Activated T-helper 2 cell treated with anti-CD3 and anti-CD28 coated beads, Interferon-gamma antibody, Interleukin-2, Interleukin-4, amounts not matched to agents 10 μg/mL and 5 μg/mL and 100 μg/mL, durations not matched to agents 14 hours and 24 hours and 36 hours (primary cell): ENCODE measurements at regions of chr1 and their contacts with region 1.

Region 1: DNA sequence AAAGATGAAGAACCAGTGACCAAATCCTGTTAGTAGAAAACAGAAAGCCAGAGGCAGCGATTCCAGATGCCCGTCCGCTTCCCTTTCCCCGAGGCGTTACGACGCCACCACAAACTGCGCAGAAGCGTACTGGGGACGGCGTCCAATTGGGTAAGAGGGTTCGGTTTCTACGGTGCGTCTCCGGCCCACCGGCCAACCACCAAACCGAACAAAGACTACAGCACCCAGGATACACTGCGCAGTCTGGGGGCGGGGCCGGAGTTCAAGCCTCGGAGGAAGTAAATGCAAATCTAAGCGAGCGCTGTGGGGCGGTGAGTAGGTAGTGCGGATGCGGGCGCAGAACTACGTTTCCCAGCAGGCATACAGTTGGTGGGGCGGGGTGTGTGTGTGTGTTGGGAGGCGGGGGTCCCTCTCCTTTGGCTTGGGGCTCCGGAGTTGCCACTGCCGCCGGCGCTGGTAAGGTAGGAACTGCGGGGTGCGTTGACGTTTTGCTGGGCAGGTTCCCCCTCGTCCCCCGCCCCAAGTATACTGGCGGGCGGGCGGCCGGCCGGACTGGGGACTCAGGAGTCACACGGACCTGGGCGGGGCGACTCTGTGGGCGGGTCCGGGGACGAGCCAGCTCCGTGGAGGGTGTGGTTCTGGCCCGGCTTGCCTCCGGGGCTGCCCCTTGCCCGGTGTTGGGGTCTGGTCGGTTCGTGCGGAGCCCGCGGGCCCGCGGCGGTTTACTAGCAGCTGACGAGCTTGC is at the starts of genes SWT1 and TRMT1L:
- DNase-seq: peak; percentile 98
- H3K4me3 Mint-ChIP-seq: peak within 1 kb of the TSS; percentile 95
- H3K27ac Mint-ChIP-seq: peak within 1 kb of the TSS; percentile 95
- H3K4me1 Mint-ChIP-seq: peaks cover 52% of the 10 kb centered on the region
- H3K27me3 Mint-ChIP-seq: no peaks in the 10 kb centered on the region
- total RNA-seq, gene SWT1: 2.1 and 2.7 TPM in 2 replicates
- total RNA-seq, gene TRMT1L: 25.9 and 28.7 TPM in 2 replicates

Region 2: DNA sequence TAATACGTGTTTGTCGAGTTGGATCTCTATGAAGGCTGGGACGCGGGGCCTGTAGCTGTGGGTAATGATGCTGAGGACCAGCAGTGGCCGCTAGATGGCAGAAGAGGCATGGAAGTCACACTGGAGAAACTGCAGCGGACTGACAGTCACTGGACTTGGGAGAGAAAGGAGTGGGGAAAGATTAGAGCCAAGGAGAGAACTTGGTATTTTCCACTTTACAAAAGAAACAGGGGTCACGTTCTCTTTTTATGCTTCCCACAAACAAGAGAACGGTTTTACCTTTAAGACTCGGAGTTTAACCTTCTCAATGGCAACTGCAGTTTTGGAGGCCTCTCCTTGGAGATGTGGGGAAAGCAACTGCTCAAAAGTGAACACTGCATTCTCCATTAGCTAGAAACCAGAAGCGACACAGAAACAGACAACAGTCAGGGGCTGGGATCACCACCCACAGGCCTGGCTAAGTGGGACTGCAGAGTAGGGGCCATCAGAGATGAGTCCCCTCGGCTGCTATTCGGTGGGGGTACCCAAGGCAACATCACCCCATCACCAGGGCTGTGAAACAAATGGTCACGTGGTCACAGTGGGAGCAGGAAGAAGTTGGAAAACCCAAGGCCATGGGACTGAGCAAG is 351.2 kb before region 1 on chr1:
- intact Hi-C with region 1: loop called (anchors 5 kb)
- DNase-seq: peak; percentile 64
- H3K4me3 Mint-ChIP-seq: no peak overlapping the region
- H3K27ac Mint-ChIP-seq: peak overlapping the region; percentile 31
- H3K4me1 Mint-ChIP-seq: peaks cover 2% of the 10 kb centered on the region
- H3K27me3 Mint-ChIP-seq: no peaks in the 10 kb centered on the region

Region 3: DNA sequence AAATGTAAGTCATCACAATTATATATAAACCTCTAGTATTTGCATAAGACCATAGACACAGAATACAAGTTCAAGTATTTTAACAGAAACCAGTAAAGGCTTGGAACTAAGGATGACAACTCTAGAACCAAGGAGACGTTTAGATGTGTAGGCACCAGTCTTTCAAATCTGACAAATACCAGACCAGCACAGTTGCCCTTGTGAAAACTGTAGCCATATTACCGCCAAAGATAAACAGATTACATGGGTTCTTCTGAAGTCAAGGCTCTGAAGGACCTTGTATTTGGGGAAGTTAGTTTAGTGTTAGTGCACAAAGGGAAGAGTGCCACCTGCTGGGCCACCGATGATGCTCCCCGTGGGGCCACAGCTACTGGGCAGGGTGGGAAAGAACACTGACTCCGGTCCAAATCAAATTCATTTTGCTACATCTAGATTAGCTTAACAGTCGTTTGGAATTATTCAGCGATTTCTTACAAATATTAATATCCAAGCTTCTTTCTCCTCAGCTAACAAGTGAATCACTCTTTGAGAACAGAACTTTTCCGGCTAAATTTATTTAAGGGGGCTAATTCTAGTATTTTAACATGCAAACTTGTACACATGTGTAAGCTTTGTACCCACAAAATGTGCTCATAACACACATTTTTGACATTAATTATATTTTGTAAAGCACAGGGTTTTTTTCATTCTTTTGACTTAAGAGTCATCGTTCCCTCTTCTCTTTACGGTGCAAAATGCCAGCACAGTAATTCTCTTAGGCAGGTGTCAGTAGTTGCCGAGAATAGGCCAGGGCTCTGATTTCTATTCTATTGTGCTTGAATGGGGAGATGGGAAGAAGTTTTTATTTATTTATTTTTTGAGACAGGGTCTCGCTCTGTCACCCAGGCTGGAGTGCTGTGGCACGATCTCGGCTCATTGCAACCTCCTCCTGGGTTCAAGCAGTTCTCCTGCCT is 174.7 kb before region 1 on chr1:
- intact Hi-C with region 1: loop called (anchors 2 kb)
- DNase-seq: peak; percentile 60
- H3K4me3 Mint-ChIP-seq: no peak overlapping the region
- H3K27ac Mint-ChIP-seq: no peak overlapping the region
- H3K4me1 Mint-ChIP-seq: peaks cover 11% of the 10 kb centered on the region
- H3K27me3 Mint-ChIP-seq: peaks cover 46% of the 10 kb centered on the region

Region 4: GRCh38 chr1:185129708-185130107 is 27.3 kb before region 1 on chr1:
- intact Hi-C with region 1: no loop called
- DNase-seq: no peak
- H3K4me3 Mint-ChIP-seq: no peak overlapping the region
- H3K27ac Mint-ChIP-seq: no peak overlapping the region
- H3K4me1 Mint-ChIP-seq: no peaks in the 10 kb centered on the region
- H3K27me3 Mint-ChIP-seq: no peaks in the 10 kb centered on the region

Region 5: DNA sequence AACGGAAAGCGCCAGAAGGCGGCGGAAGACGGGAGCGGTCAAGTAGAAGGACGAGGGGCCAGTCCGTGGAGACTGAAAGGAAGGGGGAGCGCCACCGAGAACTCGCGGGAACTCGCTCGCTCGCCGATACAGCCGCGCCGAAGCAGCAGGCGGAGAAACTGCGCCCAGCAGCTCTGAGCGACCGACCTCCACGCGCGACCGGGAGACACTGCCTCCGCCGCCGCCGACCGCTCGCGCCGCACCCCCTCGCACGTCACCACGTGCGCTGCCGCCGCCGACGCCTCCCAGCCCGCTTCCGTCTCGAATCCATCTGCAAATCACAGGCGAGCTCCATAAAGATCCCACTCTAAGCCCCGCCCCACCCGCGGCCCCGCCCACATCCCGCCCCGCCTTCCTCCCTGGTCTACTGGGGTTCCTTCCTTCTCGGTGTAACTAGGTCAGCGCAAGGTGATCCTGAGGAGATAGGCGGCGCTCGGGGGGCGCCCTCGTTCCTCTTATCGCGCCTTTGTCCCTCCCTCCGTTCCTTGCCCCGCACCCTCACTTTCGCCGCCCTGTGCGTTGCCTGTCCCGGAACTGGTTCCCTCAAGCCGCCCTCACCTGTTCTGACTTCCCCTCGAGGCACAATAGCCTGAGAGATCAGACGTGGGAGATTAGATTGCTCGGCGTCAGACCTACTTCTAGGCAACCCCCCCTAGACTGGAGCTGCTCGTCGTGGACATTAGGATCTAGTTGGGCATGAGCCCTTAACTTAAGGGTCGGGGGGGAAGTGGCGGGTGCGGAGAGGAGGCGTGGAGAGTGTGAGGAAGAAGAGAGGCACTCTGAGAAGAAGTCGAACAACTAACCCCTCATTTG is 160.2 kb after region 1 on chr1 and contains the start of gene IVNS1ABP:
- intact Hi-C with region 1: loop called (anchors 1 kb)
- DNase-seq: peak; percentile 93
- H3K4me3 Mint-ChIP-seq: peak within 1 kb of the TSS; percentile 90
- H3K27ac Mint-ChIP-seq: peak within 1 kb of the TSS; percentile 98
- H3K4me1 Mint-ChIP-seq: peaks cover 37% of the 10 kb centered on the region
- H3K27me3 Mint-ChIP-seq: no peaks in the 10 kb centered on the region
- total RNA-seq, gene IVNS1ABP: 143 and 148 TPM in 2 replicates

Region 6: DNA sequence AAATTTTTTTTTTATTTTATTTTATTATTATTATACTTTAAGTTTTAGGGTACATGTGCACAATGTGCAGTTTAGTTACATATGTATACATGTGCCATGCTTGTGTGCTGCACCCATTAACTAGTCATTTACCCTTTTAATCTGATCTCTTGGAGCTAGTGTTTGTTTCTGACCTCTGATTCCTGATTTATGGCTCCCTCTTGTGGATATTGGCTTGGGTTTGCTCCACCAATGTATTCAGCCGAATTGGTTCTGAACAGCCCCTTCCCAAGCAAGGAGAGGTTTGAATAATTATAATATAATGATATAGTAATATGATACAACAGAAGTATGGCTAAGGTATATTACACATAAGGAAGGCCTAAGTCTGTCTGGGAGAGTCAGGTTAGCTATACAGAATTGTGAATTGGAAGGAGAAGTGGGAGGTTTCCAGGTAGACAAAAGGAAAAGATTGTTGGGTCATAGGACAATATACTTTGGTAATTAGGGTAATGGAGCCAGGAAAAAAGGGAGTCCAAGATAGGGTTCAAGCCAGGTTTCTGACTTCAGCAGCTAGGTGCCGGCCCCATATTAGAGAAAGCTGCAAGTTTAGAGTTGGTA is 524.1 kb after region 1 on chr1:
- intact Hi-C with region 1: loop called (anchors 5 kb)
- DNase-seq: no peak
- H3K4me3 Mint-ChIP-seq: no peak overlapping the region
- H3K27ac Mint-ChIP-seq: no peak overlapping the region
- H3K4me1 Mint-ChIP-seq: peaks cover 14% of the 10 kb centered on the region
- H3K27me3 Mint-ChIP-seq: peaks cover 7% of the 10 kb centered on the region